ENCODE measurements at regions of chr3 and their contacts with region 1.

Region 1: GRCh38 chr3:134190250-134190649 is 60.4 kb downstream of the RYK start:
- DNase-seq: no peak
- ATAC-seq: no peak; the same call in none of the 2 replicates
- H3K4me3 ChIP-seq: no peak overlapping the region
- H3K27ac ChIP-seq: no peak overlapping the region
- H3K4me1 ChIP-seq: no peaks in the 10 kb centered on the region
- H3K27me3 ChIP-seq: no peaks in the 10 kb centered on the region
- CTCF ChIP-seq: no peak; the same call in 1 of the 2 replicates

Region 2: DNA sequence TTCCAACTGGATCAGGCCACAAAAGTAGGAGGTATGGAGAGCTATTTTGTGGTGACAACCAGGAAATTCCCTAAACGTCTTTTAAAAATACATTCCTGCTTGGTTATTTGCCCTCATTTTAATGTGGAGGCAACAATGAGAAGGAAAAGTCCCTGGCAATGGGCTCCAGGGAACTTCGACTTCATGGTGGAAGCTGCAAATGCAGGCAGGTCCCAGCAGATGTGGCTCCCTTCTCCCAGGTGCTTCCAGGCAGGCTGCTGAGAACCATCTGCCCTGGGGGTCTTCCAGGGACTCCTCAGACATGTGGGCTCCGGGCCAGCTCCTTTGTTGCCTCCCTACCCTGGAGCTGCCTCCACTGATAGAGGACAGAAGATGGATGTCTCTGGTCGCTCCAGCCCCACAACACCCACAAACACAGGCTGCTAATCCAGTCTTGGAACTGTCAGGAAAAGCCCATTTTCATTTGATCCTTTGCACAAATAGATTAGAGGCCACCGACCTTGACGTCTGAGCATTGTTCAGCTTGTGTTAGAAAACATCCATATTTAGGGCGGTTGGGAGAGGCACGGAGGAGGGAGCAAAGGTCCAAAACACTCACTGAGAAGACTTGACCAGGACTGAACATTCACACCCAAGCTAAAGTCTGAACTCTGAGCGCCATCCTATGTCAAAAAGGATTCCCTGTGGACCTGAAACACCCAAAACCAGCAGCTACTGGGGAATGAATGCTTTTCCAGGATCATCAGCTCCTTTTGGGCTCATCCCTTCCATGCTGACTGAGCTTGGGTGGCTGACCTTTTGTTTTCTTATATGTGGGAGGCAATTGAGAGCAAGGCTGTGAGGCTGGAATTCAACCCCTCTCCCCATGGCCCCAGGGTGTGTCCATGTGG is 130.3 kb before region 1 on chr3:
- CTCF ChIA-PET with region 1: no interaction called
- POLR2A ChIA-PET with region 1: interaction called, 12 read pairs
- in situ Hi-C with region 1: no loop called
- intact Hi-C with region 1: no loop called
- DNase-seq: no peak
- ATAC-seq: no peak
- H3K4me3 ChIP-seq: no peak overlapping the region
- H3K27ac ChIP-seq: no peak overlapping the region
- H3K4me1 ChIP-seq: peaks cover 11% of the 10 kb centered on the region; the same call in 1 of the 2 replicates
- H3K27me3 ChIP-seq: peaks cover 2% of the 10 kb centered on the region; the same call in 1 of the 2 replicates
- CTCF ChIP-seq: no peak

Region 3: GRCh38 chr3:134228035-134228434 is 37.8 kb after region 1 on chr3:
- CTCF ChIA-PET with region 1: interaction called, 11 read pairs
- POLR2A ChIA-PET with region 1: no interaction called
- in situ Hi-C with region 1: no loop called
- intact Hi-C with region 1: no loop called
- DNase-seq: no peak
- ATAC-seq: peak; percentile 64; the same call in 1 of the 2 replicates
- H3K4me3 ChIP-seq: no peak overlapping the region
- H3K27ac ChIP-seq: no peak overlapping the region
- H3K4me1 ChIP-seq: peaks cover 16% of the 10 kb centered on the region
- H3K27me3 ChIP-seq: no peaks in the 10 kb centered on the region
- CTCF ChIP-seq: no peak

Region 4: DNA sequence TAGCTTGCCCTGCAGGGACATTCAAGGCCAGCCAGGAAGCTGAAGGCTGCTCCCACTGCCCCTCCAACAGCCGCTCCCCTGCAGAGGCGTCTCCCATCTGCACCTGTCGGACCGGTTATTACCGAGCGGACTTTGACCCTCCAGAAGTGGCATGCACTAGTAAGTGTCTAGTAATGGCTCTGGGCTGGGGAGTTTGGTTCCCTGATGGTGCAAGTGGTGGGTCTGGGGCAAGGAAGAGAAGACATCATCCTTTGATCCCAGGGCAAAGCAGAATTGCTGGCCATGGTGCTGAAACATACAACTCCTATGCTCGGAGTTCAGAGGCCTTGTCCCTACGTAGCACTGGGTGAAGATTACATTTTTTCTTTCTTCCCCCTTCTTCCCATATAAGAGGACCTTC is 916.2 kb after region 1 on chr3:
- CTCF ChIA-PET with region 1: no interaction called
- POLR2A ChIA-PET with region 1: no interaction called
- in situ Hi-C with region 1: no loop called
- intact Hi-C with region 1: no loop called
- DNase-seq: no peak
- ATAC-seq: no peak
- H3K4me3 ChIP-seq: no peak overlapping the region
- H3K27ac ChIP-seq: no peak overlapping the region
- H3K4me1 ChIP-seq: no peaks in the 10 kb centered on the region
- H3K27me3 ChIP-seq: no peaks in the 10 kb centered on the region
- CTCF ChIP-seq: no peak

Measured in Panc1 (cell line).